Sciatic nerve (tissue), 2 donors: ENCODE measurements at regions of chr10 and their contacts with region 1.

Region 1: GRCh38 chr10:132869621-132870020 is 72.7 kb downstream of the CFAP46 start:
- DNase-seq: peak; percentile 25
- ATAC-seq: no peak

Region 2: DNA sequence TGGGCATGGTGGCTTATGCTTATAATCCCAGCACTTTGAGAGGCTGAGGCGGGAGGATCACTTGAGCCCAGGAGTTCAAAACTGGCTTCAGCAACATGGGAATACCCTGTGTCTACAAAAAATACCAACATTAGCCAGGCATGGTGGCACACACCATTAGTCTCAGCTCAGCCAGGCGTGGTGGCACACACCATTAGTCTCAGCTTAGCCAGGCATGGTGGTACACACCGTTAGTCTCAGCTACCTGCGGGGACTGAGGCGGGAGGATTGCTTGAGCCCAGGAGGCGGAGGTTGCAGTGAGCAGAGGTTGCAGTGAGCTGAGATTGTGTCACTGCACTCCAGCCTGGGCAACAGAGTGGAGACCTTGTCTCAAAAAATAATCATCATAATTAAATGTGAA is 528.6 kb before region 1 on chr10:
- intact Hi-C with region 1: loop called (anchors 5 kb)
- DNase-seq: no peak
- ATAC-seq: no peak

Region 3: DNA sequence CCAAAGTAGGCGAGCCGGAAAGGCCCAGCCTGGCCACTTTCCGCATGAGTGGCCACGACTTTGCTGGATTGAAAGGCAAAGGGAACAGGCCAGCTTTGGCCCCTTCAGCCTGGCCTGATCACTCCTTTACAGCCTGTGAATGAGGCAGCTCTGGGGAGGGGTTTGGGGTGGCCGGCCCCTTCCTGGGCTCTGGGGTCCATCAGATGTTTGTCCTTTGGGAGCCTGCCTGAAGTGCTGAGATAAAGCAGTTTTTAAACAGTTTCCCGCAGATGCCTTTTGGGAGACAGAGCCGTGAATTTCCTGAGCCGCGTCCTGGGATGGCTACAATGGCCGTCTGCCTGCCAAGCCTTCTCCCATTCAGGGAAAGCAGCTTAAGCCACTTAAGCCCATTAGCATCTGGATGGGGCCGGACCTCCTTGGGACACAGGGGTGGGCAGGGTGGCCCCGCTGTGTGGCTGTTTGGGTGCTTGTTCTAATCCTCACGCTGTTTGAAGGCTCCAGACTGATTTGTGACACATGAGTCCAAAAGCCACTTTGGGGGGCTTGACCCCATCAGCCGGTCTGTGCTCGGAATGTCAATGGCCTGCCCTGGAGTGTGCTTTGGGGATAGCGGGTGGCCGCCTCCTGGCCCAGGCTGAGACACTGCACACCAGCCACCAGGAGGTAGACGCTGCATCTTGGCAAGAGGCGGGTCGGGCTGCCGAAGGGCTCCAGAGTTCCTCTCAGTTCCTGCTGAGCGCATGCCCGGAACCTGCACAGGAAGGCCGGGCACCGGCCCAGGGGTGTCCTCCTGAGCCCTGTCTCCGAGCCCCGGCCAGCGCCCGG is 122.6 kb before region 1 on chr10:
- intact Hi-C with region 1: no loop called
- DNase-seq: no peak
- ATAC-seq: no peak